GM13976 (cell line): ENCODE measurements at regions of chr1 and their contacts with region 1.

Region 1: GRCh38 chr1:116737020-116737854 is 17.0 kb upstream of the CD2 start:
- DNase-seq: peak; percentile 78
- CTCF ChIP-seq: peak; percentile 76

Region 2: DNA sequence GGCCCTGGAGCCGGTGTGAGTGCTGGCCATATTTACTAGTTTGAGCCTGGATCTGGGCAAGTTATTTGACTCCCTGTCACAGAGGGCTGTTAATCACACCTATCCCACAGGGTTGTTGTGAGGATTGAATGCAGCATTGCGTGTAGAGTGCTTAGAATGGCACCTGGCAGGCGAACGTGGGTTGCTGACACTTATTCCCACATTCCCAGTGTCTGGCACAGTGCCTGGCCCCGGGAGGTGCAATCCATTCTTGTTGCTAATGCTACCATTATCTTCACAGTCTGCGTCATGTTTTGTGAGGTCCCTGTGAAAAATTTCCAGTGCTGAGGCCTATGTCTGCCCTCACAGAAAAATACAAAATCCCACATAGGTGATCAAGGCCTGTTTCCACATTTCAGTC is 83.1 kb after region 1 on chr1:
- in situ Hi-C with region 1: loop called (anchors 5 kb)
- DNase-seq: no peak
- CTCF ChIP-seq: no peak